Activated B cell treated with CpG ODN at 0.5 μM for 24 hours (primary cell): ENCODE measurements at regions of chr10 and their contacts with region 1.

Region 1: DNA sequence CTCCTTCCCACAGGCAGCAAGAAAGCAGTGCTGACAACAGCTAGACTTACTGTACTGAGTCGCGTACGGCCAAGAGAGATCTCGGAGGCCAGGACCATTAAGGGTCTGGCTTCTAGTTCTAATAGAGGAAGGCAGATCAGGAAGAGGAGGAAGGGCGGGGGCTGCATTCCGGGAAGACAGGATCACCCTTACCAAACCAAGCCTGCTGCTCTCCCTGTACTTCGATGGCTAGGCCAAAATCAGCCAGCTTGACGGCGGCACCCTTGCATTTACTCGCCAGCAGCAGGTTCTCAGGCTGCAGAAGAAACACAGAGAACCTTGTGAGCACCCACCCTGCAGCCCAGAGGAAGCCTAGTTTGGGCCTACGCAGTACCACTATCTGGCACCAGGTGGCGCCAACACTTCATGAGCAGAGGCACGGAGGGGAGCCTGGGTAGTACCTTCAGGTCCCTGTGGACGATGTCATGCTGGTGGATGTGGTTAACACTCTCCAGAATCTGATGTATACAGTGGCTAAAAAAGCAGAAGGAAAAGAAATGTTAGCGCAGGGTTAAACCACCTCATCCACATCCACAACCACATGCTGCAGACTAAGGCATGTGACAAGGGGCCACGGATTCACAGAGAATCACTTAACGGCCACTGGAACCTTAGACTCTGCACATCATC is 25.4 kb downstream of the CAMK2G start:
- DNase-seq: peak; percentile 93
- ATAC-seq: peak; percentile 100
- H3K4me3 Mint-ChIP-seq: peak overlapping the region; percentile 52
- H3K27ac Mint-ChIP-seq: peak overlapping the region; percentile 74
- H3K4me1 Mint-ChIP-seq: peaks cover 11% of the 10 kb centered on the region
- H3K27me3 Mint-ChIP-seq: no peaks in the 10 kb centered on the region
- CTCF ChIP-seq: peak; percentile 94

Region 2: DNA sequence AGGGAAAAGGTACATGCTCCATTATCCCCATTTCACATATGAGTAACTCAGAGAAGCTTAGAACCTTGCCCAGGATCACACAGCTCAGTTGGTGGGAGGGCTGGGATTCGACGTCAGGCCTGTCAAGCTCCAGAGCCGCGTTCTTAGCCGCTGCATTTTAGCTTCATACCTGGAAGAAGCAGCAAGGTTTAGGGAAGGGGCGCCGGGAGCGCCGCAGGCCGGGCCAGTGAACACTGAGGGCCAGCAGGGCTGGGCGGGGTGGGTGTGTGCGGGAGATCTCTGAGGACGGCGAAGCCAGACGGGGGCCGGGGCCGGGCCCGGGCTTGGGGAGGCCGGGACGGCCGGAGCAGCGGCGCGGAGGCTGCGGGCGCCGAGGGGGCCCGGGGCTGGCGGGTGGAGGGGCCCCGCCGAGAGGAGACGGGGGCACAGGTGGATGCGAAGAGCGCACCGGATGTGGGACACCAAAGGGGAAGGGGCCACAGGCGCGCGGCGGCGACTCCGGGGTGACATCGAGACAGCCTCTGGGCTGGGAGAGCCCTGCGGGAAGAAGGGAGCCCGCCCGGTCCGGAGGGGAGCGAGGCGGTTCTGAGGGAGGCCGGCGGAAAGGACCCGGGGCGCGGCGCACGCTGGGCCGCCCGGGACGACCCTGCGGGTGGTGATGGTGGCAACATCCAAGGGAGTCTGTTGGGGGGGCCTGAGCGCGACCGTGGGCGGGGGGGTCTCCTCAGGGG is 38.1 kb before region 1 on chr10:
- CTCF ChIA-PET with region 1: interaction called, 3 read pairs
- POLR2A ChIA-PET with region 1: interaction called, 3 read pairs
- intact Hi-C with region 1: loop called (anchors 1 kb)
- DNase-seq: no peak
- ATAC-seq: peak; percentile 9
- H3K4me3 Mint-ChIP-seq: peak overlapping the region; percentile 87
- H3K27ac Mint-ChIP-seq: peak overlapping the region; percentile 83
- H3K4me1 Mint-ChIP-seq: peaks cover 31% of the 10 kb centered on the region
- H3K27me3 Mint-ChIP-seq: no peaks in the 10 kb centered on the region
- CTCF ChIP-seq: no peak

Region 3: GRCh38 chr10:73874267-73875138 is 25.5 kb after region 1 on chr10 and contains the start of gene CAMK2G:
- CTCF ChIA-PET with region 1: interaction called, 129 read pairs
- POLR2A ChIA-PET with region 1: interaction called, 25 read pairs
- intact Hi-C with region 1: loop called (anchors 1 kb)
- DNase-seq: peak; percentile 74
- ATAC-seq: peak; percentile 90
- H3K4me3 Mint-ChIP-seq: peak within 1 kb of the TSS; percentile 95
- H3K27ac Mint-ChIP-seq: peak within 1 kb of the TSS; percentile 90
- H3K4me1 Mint-ChIP-seq: peaks cover 37% of the 10 kb centered on the region
- H3K27me3 Mint-ChIP-seq: no peaks in the 10 kb centered on the region
- CTCF ChIP-seq: no peak
- total RNA-seq, gene CAMK2G: 17.8 and 19.9 TPM in 2 replicates

Region 4: GRCh38 chr10:73940634-73941221 is 91.8 kb after region 1 on chr10:
- CTCF ChIA-PET with region 1: interaction called, 21 read pairs
- POLR2A ChIA-PET with region 1: no interaction called
- intact Hi-C with region 1: loop called (anchors 1 kb)
- DNase-seq: peak; percentile 84
- ATAC-seq: peak; percentile 100
- H3K4me3 Mint-ChIP-seq: peak overlapping the region; percentile 64
- H3K27ac Mint-ChIP-seq: peak overlapping the region; percentile 46
- H3K4me1 Mint-ChIP-seq: peaks cover 4% of the 10 kb centered on the region
- H3K27me3 Mint-ChIP-seq: peaks cover 2% of the 10 kb centered on the region
- CTCF ChIP-seq: no peak

Region 5: GRCh38 chr10:74058658-74059057 is 209.7 kb after region 1 on chr10:
- CTCF ChIA-PET with region 1: interaction called, 3 read pairs
- POLR2A ChIA-PET with region 1: no interaction called
- intact Hi-C with region 1: loop called (anchors 1 kb)
- DNase-seq: no peak
- ATAC-seq: peak; percentile 73
- H3K4me3 Mint-ChIP-seq: no peak overlapping the region
- H3K27ac Mint-ChIP-seq: no peak overlapping the region
- H3K4me1 Mint-ChIP-seq: peaks cover 24% of the 10 kb centered on the region
- H3K27me3 Mint-ChIP-seq: no peaks in the 10 kb centered on the region
- CTCF ChIP-seq: no peak

Region 6: GRCh38 chr10:74507951-74508350 is 659.0 kb after region 1 on chr10:
- CTCF ChIA-PET with region 1: no interaction called
- POLR2A ChIA-PET with region 1: no interaction called
- intact Hi-C with region 1: no loop called
- DNase-seq: no peak
- ATAC-seq: no peak
- H3K4me3 Mint-ChIP-seq: no peak overlapping the region
- H3K27ac Mint-ChIP-seq: no peak overlapping the region
- H3K4me1 Mint-ChIP-seq: peaks cover 4% of the 10 kb centered on the region
- H3K27me3 Mint-ChIP-seq: no peaks in the 10 kb centered on the region
- CTCF ChIP-seq: no peak